ENCODE measurements at regions of chr20 and their contacts with region 1.

Region 1: DNA sequence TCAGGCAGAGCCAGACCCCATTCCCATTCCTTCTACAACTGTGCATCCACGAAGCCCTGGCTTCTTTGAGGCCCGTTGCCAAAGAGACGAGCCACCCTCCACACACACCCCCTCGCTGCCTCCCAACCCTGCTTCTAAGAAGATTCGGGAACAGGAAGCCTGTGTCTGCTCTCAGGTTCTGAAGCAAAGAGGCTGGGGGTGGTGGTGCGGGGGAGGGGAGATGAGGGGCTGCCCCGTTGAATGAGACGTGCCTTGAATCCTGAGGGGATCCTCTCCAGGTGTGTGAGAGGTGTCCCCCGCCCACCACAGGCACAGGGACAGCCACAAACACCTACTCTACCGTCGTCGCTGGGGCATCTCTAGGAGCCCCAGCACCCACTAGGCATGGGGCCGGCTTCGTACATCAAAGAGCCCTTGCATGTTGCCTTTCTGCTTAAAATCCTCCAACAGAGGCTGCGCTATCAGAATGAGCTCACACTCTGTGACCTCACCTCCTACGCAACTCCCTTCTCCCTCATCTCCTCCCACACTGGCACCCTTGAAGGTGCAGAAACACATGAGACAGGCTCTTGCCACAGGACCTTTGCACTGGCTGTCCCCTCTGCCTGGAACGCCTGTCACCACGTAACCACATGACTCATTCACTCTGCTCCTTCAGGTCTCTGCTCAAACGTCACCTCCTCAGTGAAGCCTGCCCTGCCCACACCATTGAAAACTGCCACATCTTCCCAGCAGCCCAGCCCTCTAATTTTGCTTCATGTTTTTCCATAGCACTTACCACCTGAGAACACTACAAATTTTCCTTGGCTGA is 58.5 kb downstream of the PREX1 start:
- DNase-seq: peak; percentile 86
- H3K4me3 Mint-ChIP-seq: peak overlapping the region; percentile 66
- H3K27ac Mint-ChIP-seq: peak overlapping the region; percentile 89
- H3K4me1 Mint-ChIP-seq: peaks cover 87% of the 10 kb centered on the region
- H3K27me3 Mint-ChIP-seq: no peaks in the 10 kb centered on the region

Region 2: DNA sequence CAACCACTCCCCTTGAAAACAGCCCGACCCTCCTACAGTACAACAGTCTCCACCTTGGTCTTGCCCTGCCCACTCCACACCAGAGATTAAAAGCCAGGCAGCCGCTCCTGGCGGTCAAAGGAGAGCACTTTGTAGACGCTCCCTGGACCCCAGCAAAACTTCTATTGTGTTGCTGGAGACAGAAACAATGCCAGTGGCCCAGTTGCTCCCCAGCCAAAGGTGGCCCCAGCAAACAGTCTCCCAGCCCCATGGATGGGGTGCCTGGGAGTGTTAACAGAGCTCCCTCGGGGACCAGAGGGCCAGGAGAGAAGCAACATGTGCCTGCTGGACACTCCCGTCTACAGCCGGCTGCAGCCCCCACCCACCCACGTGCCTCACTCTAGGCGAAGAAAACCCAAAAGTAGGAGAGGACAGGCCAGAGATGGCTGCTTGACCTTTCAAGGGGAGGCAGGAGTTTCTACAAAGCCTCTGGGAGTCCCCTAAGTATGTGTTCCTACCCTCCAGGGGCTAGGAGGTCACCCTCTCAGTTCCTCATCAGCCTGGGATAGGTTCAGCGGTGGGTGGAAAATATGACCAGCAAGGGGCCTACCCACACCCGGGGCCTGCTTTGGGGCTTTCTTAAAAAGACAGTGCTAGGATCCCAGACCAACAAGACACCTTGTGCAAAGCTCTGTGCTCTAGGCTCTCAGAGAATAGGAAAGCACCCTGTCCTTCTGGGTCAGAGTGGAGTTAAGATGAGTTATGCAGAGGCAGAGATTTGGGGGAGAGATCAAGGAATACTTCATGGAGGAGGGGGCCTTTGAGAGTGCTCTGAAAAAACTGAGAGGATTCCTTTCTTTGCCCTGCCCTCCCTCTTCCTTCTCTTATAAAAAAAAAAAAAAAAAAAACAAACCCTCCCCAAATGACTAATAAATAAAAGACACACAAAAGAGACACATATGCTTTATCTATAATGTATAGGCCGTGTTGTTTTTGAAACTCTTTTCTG is 77.5 kb after region 1 on chr20:
- intact Hi-C with region 1: loop called (anchors 1 kb)
- DNase-seq: no peak
- H3K4me3 Mint-ChIP-seq: peak overlapping the region; percentile 32
- H3K27ac Mint-ChIP-seq: peak overlapping the region; percentile 98
- H3K4me1 Mint-ChIP-seq: peaks cover 23% of the 10 kb centered on the region
- H3K27me3 Mint-ChIP-seq: peaks cover 18% of the 10 kb centered on the region